ENCODE measurements at regions of chr14 and their contacts with region 1.

Region 1: DNA sequence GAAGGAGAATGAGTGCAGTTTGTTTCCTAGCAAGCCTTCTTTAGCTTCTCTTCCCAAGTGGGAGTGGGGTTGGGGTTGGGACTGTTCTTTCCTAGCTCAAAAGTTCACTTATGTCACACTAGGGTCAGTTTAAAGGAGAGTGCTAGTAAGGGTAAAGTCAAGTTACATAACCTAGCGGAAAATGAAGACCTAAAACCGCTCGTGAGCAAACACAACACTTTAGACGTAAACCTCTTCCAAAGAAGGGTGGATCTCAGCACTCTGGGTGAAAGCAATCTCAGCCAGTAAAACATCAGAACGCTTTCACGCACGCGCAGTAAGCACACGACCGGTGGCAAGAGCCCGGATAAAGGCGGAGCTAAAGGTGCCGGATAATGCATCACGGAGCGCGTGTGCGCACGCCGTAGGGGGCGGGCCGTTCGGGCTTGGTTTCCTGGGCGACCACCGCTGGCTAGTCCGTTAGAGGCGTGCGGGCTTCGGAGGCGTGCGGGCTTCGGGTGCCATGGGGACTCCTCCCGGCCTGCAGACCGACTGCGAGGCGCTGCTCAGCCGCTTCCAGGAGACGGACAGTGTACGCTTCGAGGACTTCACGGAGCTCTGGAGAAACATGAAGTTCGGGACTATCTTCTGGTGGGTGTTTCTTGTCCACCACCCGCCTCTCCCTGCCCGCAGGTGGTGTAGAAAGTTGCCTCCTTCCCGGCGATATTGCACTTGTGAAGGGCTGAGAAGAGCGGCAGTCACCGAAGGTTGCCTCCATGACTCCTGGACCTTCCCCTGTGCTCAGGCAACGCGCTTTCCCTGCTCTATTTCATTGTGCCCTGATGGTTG is at the start of gene SNAPC1:
- H3K4me3 Mint-ChIP-seq: peak within 1 kb of the TSS; percentile 94
- H3K27ac Mint-ChIP-seq: peak within 1 kb of the TSS; percentile 88
- H3K4me1 Mint-ChIP-seq: peaks cover 45% of the 10 kb centered on the region
- H3K27me3 Mint-ChIP-seq: no peaks in the 10 kb centered on the region

Region 2: DNA sequence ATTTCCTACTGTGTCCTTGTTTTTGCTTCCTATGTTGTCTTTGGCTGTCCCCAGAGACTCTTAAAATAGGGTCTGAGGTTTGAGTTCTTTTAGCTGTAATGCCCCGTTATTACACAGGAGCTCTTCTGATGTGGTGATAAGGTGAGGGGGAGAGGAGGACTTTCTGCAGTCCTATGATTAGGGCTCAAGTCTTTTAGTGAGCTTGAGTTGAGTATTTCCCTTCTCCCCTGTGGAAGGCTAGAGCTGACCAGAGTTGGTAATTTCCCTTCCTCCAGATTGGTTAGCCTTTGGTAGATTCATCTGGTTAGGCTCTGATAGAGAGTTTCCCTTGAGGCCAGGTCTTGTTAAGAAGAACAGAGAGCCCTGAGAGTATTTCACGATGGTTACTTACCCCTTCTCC is 71.2 kb before region 1 on chr14:
- intact Hi-C with region 1: no loop called
- H3K4me3 Mint-ChIP-seq: no peak overlapping the region
- H3K27ac Mint-ChIP-seq: no peak overlapping the region
- H3K4me1 Mint-ChIP-seq: peaks cover 4% of the 10 kb centered on the region
- H3K27me3 Mint-ChIP-seq: peaks cover 1% of the 10 kb centered on the region

Region 3: DNA sequence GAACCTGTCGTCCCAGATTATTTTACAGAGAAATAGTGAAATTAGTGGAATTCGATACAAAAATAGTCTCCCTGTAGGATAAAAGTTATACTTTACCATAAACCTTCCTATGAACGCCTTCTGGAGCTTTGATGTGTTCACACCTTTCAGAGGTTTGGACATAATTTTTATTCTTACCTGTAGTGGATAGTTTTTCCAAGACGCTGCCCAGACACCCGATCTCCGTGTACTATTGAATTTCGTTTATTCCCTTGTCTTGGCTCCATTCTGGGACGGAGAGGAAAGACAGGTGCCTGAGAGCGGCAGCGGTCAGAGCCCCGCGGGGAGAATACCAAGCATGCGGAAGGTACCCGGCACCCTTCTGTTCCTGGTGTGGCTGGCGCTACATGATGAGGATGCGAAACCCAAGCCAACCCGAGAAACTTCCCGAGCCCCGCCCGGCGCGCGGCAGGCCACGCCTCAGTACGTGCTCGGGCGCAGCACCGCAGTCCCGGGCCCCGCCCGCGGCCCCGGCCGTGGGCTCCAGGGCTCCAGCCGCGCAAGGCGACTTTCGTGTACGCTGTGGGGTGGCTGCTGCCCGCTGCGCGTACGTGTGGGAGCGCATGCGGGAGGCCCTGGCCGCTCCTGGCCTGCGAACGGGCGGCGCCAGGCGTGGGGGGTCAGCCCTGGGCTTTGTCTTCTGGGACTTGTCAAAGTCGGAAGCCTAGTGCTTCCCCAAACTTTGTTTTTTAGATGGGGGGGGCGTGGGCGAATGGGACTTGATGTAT is 11.3 kb before region 1 on chr14:
- intact Hi-C with region 1: loop called (anchors 1 kb)
- H3K4me3 Mint-ChIP-seq: peak overlapping the region; percentile 92
- H3K27ac Mint-ChIP-seq: peak overlapping the region; percentile 90
- H3K4me1 Mint-ChIP-seq: peaks cover 33% of the 10 kb centered on the region
- H3K27me3 Mint-ChIP-seq: no peaks in the 10 kb centered on the region

Measured in dendritic cell treated with granulocyte-macrophage colony-stimulating factor and Interleukin-4, amounts not matched to agents 40 ng/mL and 50 ng/mL, for 4 days (primary cell).